ENCODE measurements at regions of chr1 and their contacts with region 1.

Region 1: DNA sequence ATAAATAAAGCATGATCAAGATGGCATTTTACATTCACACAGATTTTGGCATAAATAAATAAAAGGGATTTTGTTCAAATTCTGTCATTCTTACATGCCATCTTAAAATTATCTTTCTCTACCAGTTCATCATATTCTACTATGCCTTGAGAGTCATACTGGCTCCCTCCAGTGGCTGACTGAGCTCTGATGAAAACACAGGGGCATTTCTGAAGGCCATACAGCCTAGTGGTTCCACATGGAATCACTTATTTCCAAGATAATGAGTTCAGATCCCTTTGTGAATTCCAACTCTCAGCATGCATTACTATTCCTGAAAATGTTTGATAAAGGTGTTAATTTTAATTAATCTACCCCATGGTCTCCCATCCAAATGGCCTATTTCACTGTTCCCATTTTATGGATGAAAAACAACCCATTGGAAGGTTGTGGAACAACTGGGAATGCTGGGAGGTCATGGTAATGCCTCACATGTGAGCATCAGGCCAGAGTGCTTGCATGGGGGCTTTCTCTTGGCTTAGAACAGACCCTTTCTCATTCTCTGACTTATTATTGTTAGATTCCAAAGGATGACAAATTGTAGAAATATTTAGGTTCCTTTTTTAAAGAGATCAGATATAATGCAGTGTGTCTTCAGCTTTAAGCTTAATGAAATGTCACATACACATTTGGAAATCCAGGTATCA is 622.4 kb upstream of the PKN2 start:
- DNase-seq: no peak
- H3K4me3 ChIP-seq: no peak overlapping the region
- H3K27ac ChIP-seq: no peak overlapping the region
- H3K4me1 ChIP-seq: peaks cover 0 to 4% (median 0%) of the 10 kb centered on the region in 6 donors
- H3K27me3 ChIP-seq: no peaks in the 10 kb centered on the region
- CTCF ChIP-seq: peak in 9 of 11 experiments; percentile 16 to 65 (median 45)
- POLR2A ChIP-seq: no peak

Region 2: GRCh38 chr1:87279966-87280535 is 781.6 kb before region 1 on chr1:
- intact Hi-C with region 1: loop called (anchors 10 kb)
- DNase-seq: no peak
- H3K4me3 ChIP-seq: no peak overlapping the region
- H3K27ac ChIP-seq: peak overlapping the region in 7 of 8 donors; percentile 22 to 55 (median 37)
- H3K4me1 ChIP-seq: peaks cover 0 to 10% (median 3%) of the 10 kb centered on the region in 6 donors
- H3K27me3 ChIP-seq: no peaks in the 10 kb centered on the region
- CTCF ChIP-seq: no peak
- POLR2A ChIP-seq: no peak

Region 3: DNA sequence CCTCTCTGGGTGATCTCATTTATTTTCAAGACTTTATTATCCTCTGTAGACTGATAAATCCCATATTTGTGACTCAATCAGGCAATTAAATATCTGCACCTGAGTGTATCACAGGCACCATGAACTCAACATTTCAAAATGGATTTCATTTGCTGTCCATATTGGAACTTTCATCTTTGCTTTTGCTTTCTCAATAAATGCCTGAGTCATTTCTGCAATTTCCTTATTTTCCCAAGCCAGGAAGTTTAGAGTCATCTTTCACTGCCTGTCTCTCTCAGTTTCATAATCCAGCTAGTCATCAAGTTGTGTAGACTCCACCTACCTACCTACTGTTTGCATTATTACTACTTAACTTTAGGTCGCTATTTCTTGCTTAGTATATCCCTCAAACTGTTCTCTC is 192.1 kb before region 1 on chr1:
- intact Hi-C with region 1: no loop called
- DNase-seq: no peak
- H3K4me3 ChIP-seq: peak overlapping the region in 1 of 8 donors; percentile 15
- H3K27ac ChIP-seq: peak overlapping the region in 5 of 8 donors; percentile 20 to 69 (median 56)
- H3K4me1 ChIP-seq: peaks cover 0 to 55% (median 40%) of the 10 kb centered on the region in 6 donors
- H3K27me3 ChIP-seq: no peaks in the 10 kb centered on the region
- CTCF ChIP-seq: no peak
- POLR2A ChIP-seq: no peak

Region 4: GRCh38 chr1:88529581-88529980 is 467.9 kb after region 1 on chr1:
- intact Hi-C with region 1: no loop called
- DNase-seq: no peak
- H3K4me3 ChIP-seq: no peak overlapping the region
- H3K27ac ChIP-seq: no peak overlapping the region
- H3K4me1 ChIP-seq: no peaks in the 10 kb centered on the region
- H3K27me3 ChIP-seq: no peaks in the 10 kb centered on the region
- CTCF ChIP-seq: no peak
- POLR2A ChIP-seq: no peak